ENCODE measurements at regions of chr5 and their contacts with region 1.

Region 1: DNA sequence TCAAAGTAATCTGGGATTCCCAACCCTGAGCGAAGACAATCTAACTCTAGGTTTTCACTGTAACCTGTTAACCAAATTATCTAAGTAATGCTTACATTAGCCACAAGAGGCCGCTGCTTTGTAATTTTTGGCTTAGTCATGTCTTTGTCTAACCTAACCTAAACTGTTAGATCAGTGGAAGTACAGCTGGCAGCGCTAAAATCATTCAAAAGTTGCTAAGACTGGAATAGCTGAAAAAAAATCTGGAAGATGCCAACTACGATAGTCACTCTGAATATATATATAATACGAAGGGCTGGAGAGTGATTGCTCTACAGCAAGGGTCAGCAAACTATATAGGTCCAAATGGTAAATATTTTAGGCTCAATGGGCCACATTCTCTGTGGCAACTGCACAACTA is 60.2 kb downstream of the FBXO38 start:
- DNase-seq: peak; percentile 67
- H3K4me3 Mint-ChIP-seq: no peak overlapping the region
- H3K27ac Mint-ChIP-seq: no peak overlapping the region
- H3K4me1 Mint-ChIP-seq: no peaks in the 10 kb centered on the region
- H3K27me3 Mint-ChIP-seq: no peaks in the 10 kb centered on the region

Region 2: GRCh38 chr5:147949711-147950573 is 494.1 kb before region 1 on chr5:
- CTCF ChIA-PET with region 1: no interaction called
- intact Hi-C with region 1: loop called (anchors 5 kb)
- DNase-seq: no peak
- H3K4me3 Mint-ChIP-seq: no peak overlapping the region
- H3K27ac Mint-ChIP-seq: no peak overlapping the region
- H3K4me1 Mint-ChIP-seq: no peaks in the 10 kb centered on the region
- H3K27me3 Mint-ChIP-seq: peaks cover 2% of the 10 kb centered on the region

Region 3: DNA sequence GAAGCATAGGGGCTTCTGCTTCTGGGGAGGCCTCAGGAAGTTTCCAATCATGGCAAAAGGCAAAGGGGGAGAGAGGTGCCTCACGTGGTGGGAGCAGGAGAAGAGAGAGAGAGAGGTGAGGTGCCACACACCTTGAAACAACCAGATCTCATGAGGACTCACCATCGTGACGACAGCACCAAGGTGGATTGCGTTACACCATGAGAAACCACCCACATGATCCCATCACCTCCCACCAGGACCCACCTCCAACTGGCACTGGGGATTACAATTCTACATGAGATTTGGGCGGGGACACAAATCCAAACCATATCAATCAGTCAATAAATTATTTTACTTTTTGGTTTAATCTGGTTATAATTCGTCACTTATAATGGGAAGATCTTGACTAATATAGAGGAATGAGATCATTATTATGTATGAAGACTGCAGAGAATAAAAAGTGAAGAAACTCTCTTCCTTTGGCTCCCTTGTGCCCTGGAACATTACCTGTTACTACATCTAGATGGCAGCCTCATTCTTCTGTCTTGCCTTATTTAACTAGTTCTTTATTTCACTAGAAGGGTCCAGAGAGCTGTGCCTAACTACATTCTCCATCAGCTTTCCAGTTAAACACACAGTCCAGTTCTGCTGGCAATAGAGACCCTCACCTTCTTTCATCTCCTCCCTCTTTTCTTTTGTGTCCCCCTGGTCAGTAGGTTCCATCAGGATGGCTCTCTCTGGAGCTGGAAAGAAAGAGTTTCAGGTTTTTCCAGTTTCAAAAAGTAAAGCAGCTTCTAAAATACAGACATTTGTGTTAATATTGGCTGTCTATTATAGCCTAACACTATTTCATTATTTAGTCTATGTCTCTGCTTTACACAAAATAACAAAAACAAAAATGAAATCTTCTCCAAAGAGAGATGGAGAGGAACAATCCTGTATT is 153.5 kb before region 1 on chr5:
- CTCF ChIA-PET with region 1: interaction called, 4 read pairs
- intact Hi-C with region 1: loop called (anchors 10 kb)
- DNase-seq: no peak
- H3K4me3 Mint-ChIP-seq: no peak overlapping the region
- H3K27ac Mint-ChIP-seq: no peak overlapping the region
- H3K4me1 Mint-ChIP-seq: no peaks in the 10 kb centered on the region
- H3K27me3 Mint-ChIP-seq: no peaks in the 10 kb centered on the region

Region 4: DNA sequence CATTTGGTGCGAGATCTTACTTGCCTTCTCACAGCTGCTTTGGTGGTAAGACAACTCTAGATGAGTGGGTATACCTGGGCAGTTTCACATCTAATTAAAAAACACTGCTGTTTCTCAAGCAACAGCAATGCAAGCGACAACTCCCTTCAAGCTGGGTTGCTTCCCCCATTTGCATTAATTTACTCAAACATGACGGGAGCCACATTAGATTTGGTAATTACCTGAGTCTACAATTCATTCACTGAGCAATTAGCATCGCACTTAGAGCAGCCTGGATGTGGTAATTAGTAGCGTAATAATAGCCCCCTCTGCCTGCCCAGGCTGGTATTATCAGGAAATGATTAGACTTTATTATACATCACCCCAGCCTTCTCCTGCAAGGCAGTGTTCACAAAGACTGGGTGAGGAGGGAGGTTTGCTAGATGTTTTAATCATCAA is 13.2 kb after region 1 on chr5:
- CTCF ChIA-PET with region 1: interaction called, 31 read pairs
- intact Hi-C with region 1: no loop called
- DNase-seq: peak; percentile 35
- H3K4me3 Mint-ChIP-seq: no peak overlapping the region
- H3K27ac Mint-ChIP-seq: no peak overlapping the region
- H3K4me1 Mint-ChIP-seq: peaks cover 5% of the 10 kb centered on the region
- H3K27me3 Mint-ChIP-seq: peaks cover 7% of the 10 kb centered on the region